ENCODE measurements at regions of chr3 and their contacts with region 1.

Region 1: DNA sequence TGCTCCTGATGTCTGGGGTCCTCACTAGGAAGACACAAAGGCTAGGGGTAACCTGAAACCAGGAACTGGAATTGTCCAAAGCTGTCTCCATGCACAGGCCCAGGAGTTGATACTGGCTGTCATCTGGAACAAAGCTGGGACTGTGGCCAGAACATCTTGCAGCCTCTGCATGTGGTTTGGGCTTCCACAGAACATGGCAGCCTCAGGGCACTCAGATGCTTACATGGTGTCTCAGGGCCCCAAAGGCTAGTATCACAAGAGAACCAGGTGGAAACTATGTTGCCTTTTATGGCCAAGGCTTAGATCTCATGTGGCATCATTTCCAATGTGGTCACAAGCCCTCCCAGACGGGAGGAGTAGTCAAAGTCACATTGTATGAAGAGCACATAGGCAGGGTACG is 335.2 kb upstream of the TRIM42 start:
- DNase-seq: no peak

Region 2: DNA sequence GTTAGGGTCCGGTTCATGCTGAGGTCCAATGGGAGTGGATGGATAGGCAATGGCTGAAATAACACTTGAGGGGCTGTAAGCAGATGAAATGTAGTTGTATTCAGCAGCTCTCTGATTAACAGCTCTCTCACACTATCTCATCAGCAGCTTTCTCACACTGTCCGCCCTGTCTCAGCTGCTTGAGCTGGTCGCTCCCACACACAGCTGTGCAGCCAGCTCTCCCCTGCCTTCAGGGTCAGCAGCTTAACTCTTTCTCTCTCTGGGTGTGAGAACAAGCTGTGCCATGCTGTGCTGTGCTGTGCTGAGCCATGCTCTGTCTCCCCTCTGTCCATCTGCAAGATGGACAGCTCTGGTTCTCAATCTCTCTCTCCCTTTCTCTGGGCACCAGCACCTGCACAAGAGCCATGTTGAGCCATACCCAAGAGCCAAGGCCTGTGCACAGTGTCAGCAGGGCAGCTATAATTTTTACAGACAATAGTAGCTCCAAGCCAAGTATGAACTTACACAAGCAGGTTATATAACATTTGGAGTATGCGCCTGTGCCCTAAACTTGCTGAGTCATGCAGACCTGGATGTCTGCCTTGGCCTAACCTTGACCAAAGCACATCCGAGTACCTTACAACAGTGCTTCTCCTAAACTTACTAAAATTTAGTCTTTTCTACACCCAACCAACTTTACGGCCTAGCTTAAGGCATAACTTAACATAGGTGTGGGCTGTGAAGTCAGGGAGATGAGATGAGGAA is 43.9 kb after region 1 on chr3:
- intact Hi-C with region 1: loop called in 1 of 2 experiments (anchors 1 kb)
- DNase-seq: no peak